Mammary epithelial cell (primary cell): ENCODE measurements at regions of chr11 and their contacts with region 1.

Region 1: DNA sequence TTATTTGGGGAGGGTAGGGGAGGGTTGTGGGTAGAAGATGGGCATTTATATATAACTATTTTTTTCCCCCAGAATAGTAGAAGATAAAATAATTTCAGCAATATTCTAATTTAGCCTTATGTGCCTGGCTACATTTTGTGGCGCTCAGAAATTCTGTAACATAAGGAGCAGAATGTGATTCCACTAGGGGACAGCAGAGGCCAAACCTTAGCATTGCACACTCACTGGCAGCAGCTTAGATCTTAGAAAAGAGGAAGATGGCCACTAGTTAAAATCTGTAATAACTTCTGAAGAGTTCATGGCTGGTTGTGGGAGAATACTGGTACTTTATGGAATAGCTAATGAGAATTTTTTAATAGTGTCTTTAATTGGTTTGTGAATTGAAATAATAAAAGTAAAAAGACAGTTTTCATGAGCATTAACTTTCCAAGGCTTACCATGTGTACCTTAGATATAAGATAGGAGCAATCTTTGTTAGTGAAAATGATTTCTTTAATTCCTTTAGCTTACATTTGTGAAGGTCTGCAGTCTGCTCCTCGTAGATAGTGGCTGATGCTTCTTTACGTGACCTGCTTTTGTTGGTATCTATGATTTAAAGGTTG is 33.1 kb downstream of the DDX10 start:
- DNase-seq: peak; percentile 61
- H3K4me3 ChIP-seq: no peak overlapping the region
- H3K27ac ChIP-seq: peak overlapping the region; percentile 65
- H3K4me1 ChIP-seq: peaks cover 27% of the 10 kb centered on the region
- H3K27me3 ChIP-seq: no peaks in the 10 kb centered on the region
- CTCF ChIP-seq: peak; percentile 99

Region 2: DNA sequence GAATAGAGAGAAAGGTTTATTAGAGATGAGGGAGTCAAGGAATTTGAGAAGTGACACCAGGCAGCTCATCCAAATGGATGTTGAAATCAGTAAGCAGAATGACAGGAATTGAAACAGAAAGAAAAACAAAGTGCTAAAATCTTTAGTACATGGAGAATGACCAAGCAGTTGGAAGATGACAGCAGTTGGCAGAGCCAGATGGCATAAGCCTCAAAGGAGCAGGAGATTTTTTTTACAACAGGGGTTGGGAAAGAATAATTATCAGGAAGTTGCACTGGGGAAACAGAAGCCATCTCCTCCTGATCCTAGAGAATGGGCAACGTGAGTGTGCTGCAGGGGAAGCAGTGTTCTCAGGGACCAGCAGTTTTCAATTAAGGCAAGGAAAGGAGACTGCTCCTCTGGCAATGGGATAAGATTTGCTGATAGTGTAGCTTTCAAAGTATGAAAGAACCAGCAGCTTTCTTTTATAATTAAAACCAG is 740.8 kb before region 1 on chr11:
- CTCF ChIA-PET with region 1: no interaction called
- dilution Hi-C with region 1: no loop called
- in situ Hi-C with region 1: no loop called
- intact Hi-C with region 1: no loop called
- DNase-seq: no peak
- H3K4me3 ChIP-seq: no peak overlapping the region
- H3K27ac ChIP-seq: no peak overlapping the region
- H3K4me1 ChIP-seq: no peaks in the 10 kb centered on the region
- H3K27me3 ChIP-seq: no peaks in the 10 kb centered on the region
- CTCF ChIP-seq: no peak

Region 3: DNA sequence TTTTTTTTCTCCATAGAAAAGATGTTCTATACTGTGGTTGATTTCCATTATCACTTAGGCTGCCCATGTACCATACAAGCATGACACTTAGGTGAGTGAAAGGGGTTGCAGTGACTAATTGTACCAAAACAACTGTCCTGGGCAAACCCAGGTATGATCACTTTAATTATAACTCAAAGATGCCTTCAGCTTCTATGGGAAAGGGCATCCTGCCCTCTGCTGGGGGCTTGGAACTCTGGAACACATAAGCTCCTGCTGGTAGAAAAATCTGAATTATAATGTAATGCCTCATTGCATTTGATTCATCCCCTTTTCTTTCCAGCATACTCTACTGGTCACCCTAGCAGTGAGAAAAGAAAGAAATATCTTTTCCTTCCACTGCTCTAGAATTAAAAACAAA is 173.2 kb after region 1 on chr11:
- CTCF ChIA-PET with region 1: interaction called, 25 read pairs
- dilution Hi-C with region 1: no loop called
- in situ Hi-C with region 1: loop called in 1 of 2 experiments (anchors 25 kb)
- intact Hi-C with region 1: loop called (anchors 1 kb)
- DNase-seq: peak; percentile 56
- H3K4me3 ChIP-seq: no peak overlapping the region
- H3K27ac ChIP-seq: no peak overlapping the region
- H3K4me1 ChIP-seq: peaks cover 15% of the 10 kb centered on the region
- H3K27me3 ChIP-seq: no peaks in the 10 kb centered on the region
- CTCF ChIP-seq: peak; percentile 40 to 59

Region 4: GRCh38 chr11:109338131-109338530 is 640.2 kb after region 1 on chr11:
- CTCF ChIA-PET with region 1: no interaction called
- dilution Hi-C with region 1: no loop called
- in situ Hi-C with region 1: no loop called
- intact Hi-C with region 1: loop called (anchors 5 kb)
- DNase-seq: no peak
- H3K4me3 ChIP-seq: no peak overlapping the region
- H3K27ac ChIP-seq: no peak overlapping the region
- H3K4me1 ChIP-seq: peaks cover 9% of the 10 kb centered on the region
- H3K27me3 ChIP-seq: no peaks in the 10 kb centered on the region
- CTCF ChIP-seq: no peak

Region 5: DNA sequence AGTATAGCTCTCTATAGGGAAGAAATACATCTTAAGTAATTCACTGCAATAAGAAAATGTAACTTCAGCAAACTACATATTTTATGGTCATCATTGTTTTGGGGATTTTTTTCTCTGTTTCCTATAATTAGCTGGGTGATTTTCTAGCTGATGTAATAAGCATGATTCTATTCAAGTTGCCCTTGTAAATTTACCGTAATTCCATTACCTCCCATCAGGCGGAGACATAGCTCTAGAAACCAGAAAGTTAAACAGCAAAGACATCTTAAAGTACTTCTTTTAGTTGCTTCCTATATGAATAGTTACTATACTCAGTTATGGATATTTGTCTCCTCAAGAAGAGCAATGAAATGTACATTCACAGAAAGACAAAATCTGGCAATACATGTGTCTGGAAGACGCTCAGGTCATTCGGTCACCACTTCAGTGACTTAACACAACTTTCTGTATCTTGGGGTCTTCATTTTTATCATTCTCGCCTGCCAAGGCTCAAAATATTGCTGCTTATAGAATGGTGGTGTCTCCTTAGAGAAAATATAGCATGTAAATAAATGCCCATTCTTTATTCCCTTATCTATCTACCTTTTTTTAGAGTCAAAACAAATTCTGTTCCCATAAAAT is 1155.3 kb after region 1 on chr11:
- CTCF ChIA-PET with region 1: no interaction called
- dilution Hi-C with region 1: no loop called
- in situ Hi-C with region 1: no loop called
- intact Hi-C with region 1: loop called (anchors 2 kb)
- DNase-seq: peak; percentile 63
- H3K4me3 ChIP-seq: no peak overlapping the region
- H3K27ac ChIP-seq: no peak overlapping the region
- H3K4me1 ChIP-seq: peaks cover 4% of the 10 kb centered on the region
- H3K27me3 ChIP-seq: no peaks in the 10 kb centered on the region
- CTCF ChIP-seq: peak; percentile 79 to 87

Region 6: DNA sequence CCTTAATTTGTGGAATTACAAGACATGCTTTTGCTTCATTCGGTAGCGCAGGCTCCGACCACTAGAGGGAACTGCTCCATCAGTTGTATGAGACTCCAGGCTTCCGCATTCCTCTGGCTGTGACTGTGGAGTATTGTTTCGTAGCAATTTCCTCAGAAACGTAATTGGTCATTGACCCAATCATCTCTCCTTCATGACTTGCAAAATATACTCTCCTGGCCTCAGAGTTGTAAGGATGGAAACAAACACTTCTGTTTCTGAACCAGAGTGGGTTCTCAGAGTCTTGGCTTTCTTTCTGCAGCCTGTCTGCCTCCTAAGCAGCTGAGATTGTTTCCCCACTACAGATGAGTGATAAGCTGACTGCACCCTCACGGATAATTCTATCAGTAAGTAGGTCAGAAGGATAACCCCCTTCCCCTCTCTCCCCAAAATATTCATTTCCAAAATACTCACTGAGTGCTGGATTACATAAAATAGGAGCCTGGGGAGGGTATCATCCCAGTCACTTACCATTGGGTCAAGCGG is 1248.4 kb after region 1 on chr11:
- CTCF ChIA-PET with region 1: no interaction called
- dilution Hi-C with region 1: no loop called
- in situ Hi-C with region 1: loop called in 1 of 2 experiments (anchors 25 kb)
- intact Hi-C with region 1: no loop called
- DNase-seq: peak; percentile 87
- H3K4me3 ChIP-seq: peak overlapping the region; percentile 18 to 35 (median 29)
- H3K27ac ChIP-seq: peak overlapping the region; percentile 95
- H3K4me1 ChIP-seq: peaks cover 4% of the 10 kb centered on the region
- H3K27me3 ChIP-seq: no peaks in the 10 kb centered on the region
- CTCF ChIP-seq: peak; percentile 95 to 99